ENCODE measurements at regions of chr5 and their contacts with region 1.

Region 1: DNA sequence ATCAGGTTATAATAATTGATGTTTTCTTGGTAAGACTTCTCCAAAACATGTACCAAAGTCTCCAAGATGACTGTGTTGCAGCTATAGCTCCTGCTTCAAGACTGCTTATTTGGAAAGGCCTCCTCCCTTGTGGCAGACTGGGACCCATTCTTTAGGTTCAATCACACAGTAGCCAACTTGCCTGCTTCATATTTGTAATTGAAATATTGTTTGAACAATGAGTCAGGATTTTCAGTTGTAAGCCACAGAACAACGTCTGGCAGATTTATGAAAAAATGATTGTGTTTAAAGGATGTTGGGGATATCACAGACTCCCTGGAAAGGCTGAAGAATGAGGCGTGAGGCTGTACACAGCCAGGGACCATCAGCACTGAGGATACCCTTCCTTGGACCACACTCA is 458.9 kb downstream of the MED10 start:
- DNase-seq: no peak
- H3K4me3 Mint-ChIP-seq: no peak overlapping the region
- H3K27ac Mint-ChIP-seq: no peak overlapping the region
- H3K4me1 Mint-ChIP-seq: no peaks in the 10 kb centered on the region
- H3K27me3 Mint-ChIP-seq: peaks cover 5% of the 10 kb centered on the region

Region 2: GRCh38 chr5:5939759-5940370 is 20.5 kb after region 1 on chr5:
- intact Hi-C with region 1: no loop called
- DNase-seq: no peak
- H3K4me3 Mint-ChIP-seq: no peak overlapping the region
- H3K27ac Mint-ChIP-seq: no peak overlapping the region
- H3K4me1 Mint-ChIP-seq: no peaks in the 10 kb centered on the region
- H3K27me3 Mint-ChIP-seq: no peaks in the 10 kb centered on the region

Region 3: GRCh38 chr5:5957737-5958136 is 38.3 kb after region 1 on chr5:
- intact Hi-C with region 1: loop called (anchors 2 kb)
- DNase-seq: no peak
- H3K4me3 Mint-ChIP-seq: no peak overlapping the region
- H3K27ac Mint-ChIP-seq: no peak overlapping the region
- H3K4me1 Mint-ChIP-seq: no peaks in the 10 kb centered on the region
- H3K27me3 Mint-ChIP-seq: no peaks in the 10 kb centered on the region

Measured in activated T-helper 1 cell treated with anti-CD3 and anti-CD28 coated beads, Interleukin-12 subunit alpha, Interleukin-12 subunit beta, Interleukin-2, Interleukin-4 antibody, amounts not matched to agents 30 ng/mL and 10 ng/mL and 1 ng/mL, durations not matched to agents 14 hours and 24 hours and 36 hours (primary cell).